Naive thymus-derived CD4-positive, alpha-beta T cell (primary cell): ENCODE measurements at regions of chr20 and their contacts with region 1.

Region 1: DNA sequence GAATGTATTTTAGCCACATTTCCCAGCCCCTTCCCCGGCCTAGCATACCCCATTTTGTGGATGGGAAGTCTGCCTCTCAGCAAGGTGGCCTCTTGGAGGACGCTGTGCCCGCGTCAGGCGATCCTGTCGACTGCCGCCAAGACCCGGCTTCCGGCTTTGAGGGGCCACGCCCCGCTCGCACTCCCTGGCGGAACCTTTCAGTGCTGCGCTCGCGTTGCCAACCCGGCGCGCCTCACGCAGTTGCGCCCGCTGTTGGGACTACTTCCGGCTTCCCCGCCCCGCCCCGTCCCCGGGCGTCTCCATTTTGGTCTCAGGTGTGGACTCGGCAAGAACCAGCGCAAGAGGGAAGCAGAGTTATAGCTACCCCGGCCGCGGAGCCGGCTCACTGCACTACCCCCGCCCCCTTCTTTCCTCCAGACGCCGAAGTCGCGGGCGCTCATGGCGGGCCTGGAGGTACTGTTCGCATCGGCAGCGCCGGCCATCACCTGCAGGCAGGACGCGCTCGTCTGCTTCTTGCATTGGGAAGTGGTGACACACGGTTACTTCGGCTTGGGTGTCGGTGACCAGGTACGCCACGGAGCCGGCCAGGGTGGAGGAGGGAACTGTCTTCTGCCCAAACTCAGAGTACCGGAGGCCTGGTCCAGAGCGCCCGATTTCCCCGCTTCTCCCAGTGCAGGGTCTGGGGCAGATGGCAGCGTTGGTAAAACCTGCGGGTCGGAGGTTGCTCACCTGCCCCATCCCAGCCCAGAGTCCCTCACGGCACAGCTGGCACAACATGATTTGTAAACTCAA is at the start of gene PSMF1:
- DNase-seq: peak; percentile 93 to 99 (median 96)
- ATAC-seq: peak; percentile 98
- H3K4me3 ChIP-seq: peak within 1 kb of the TSS; percentile 98
- H3K4me3 Mint-ChIP-seq: peak within 1 kb of the TSS; percentile 92 to 97 (median 94)
- H3K27ac ChIP-seq: peak within 1 kb of the TSS; percentile 85
- H3K27ac Mint-ChIP-seq: peak within 1 kb of the TSS; percentile 81 to 97 (median 94)
- H3K4me1 ChIP-seq: peaks cover 40 to 45% of the 10 kb centered on the region in 2 donors
- H3K4me1 Mint-ChIP-seq: peaks cover 46 to 68% (median 61%) of the 10 kb centered on the region in 7 donors
- H3K27me3 ChIP-seq: no peaks in the 10 kb centered on the region
- H3K27me3 Mint-ChIP-seq: no peaks in the 10 kb centered on the region
- total RNA-seq, gene PSMF1: 88.7 to 157 (median 114) TPM

Region 2: GRCh38 chr20:381581-382290 is 736.8 kb before region 1 on chr20:
- CTCF ChIA-PET with region 1: no interaction called
- POLR2A ChIA-PET with region 1: no interaction called
- intact Hi-C with region 1: loop called in 1 of 2 experiments (anchors 2 kb)
- DNase-seq: peak; percentile 41 to 75 (median 64)
- ATAC-seq: peak; percentile 81
- H3K4me3 ChIP-seq: peak overlapping the region; percentile 64
- H3K4me3 Mint-ChIP-seq: peak overlapping the region; percentile 66 to 91 (median 84)
- H3K27ac ChIP-seq: peak overlapping the region; percentile 73
- H3K27ac Mint-ChIP-seq: peak overlapping the region; percentile 55 to 86 (median 78)
- H3K4me1 ChIP-seq: no peaks in the 10 kb centered on the region
- H3K4me1 Mint-ChIP-seq: peaks cover 4 to 34% (median 13%) of the 10 kb centered on the region in 7 donors
- H3K27me3 ChIP-seq: no peaks in the 10 kb centered on the region
- H3K27me3 Mint-ChIP-seq: peaks cover 0 to 3% (median 0%) of the 10 kb centered on the region in 5 donors

Region 3: GRCh38 chr20:634556-634955 is 484.0 kb before region 1 on chr20:
- CTCF ChIA-PET with region 1: no interaction called
- POLR2A ChIA-PET with region 1: no interaction called
- intact Hi-C with region 1: no loop called
- DNase-seq: no peak
- ATAC-seq: no peak
- H3K4me3 ChIP-seq: no peak overlapping the region
- H3K4me3 Mint-ChIP-seq: no peak overlapping the region
- H3K27ac ChIP-seq: no peak overlapping the region
- H3K27ac Mint-ChIP-seq: no peak overlapping the region
- H3K4me1 ChIP-seq: no peaks in the 10 kb centered on the region
- H3K4me1 Mint-ChIP-seq: no peaks in the 10 kb centered on the region
- H3K27me3 ChIP-seq: no peaks in the 10 kb centered on the region
- H3K27me3 Mint-ChIP-seq: peaks cover 5 to 29% (median 16%) of the 10 kb centered on the region in 5 donors

Region 4: GRCh38 chr20:1108437-1108920 is 10.1 kb before region 1 on chr20:
- CTCF ChIA-PET with region 1: interaction called, 5 read pairs
- POLR2A ChIA-PET with region 1: interaction called, 4 read pairs
- intact Hi-C with region 1: loop called in 1 of 2 experiments (anchors 1 kb)
- DNase-seq: peak in 8 of 9 donors; percentile 18 to 51 (median 43)
- ATAC-seq: peak; percentile 87
- H3K4me3 ChIP-seq: no peak overlapping the region
- H3K4me3 Mint-ChIP-seq: no peak overlapping the region
- H3K27ac ChIP-seq: no peak overlapping the region
- H3K27ac Mint-ChIP-seq: peak overlapping the region in 1 of 9 donors; percentile 60
- H3K4me1 ChIP-seq: no peaks in the 10 kb centered on the region
- H3K4me1 Mint-ChIP-seq: peaks cover 5 to 7% (median 6%) of the 10 kb centered on the region in 7 donors
- H3K27me3 ChIP-seq: no peaks in the 10 kb centered on the region
- H3K27me3 Mint-ChIP-seq: peaks cover 0 to 10% (median 0%) of the 10 kb centered on the region in 5 donors

Region 5: GRCh38 chr20:1209447-1210387 is 91.2 kb after region 1 on chr20:
- CTCF ChIA-PET with region 1: no interaction called
- POLR2A ChIA-PET with region 1: no interaction called
- intact Hi-C with region 1: no loop called
- DNase-seq: no peak
- ATAC-seq: no peak
- H3K4me3 ChIP-seq: no peak overlapping the region
- H3K4me3 Mint-ChIP-seq: no peak overlapping the region
- H3K27ac ChIP-seq: no peak overlapping the region
- H3K27ac Mint-ChIP-seq: peak overlapping the region in 1 of 9 donors; percentile 3
- H3K4me1 ChIP-seq: peaks cover 0 to 5% of the 10 kb centered on the region in 2 donors
- H3K4me1 Mint-ChIP-seq: peaks cover 1 to 20% (median 9%) of the 10 kb centered on the region in 7 donors
- H3K27me3 ChIP-seq: no peaks in the 10 kb centered on the region
- H3K27me3 Mint-ChIP-seq: peaks cover 0 to 18% (median 0%) of the 10 kb centered on the region in 5 donors

Region 6: DNA sequence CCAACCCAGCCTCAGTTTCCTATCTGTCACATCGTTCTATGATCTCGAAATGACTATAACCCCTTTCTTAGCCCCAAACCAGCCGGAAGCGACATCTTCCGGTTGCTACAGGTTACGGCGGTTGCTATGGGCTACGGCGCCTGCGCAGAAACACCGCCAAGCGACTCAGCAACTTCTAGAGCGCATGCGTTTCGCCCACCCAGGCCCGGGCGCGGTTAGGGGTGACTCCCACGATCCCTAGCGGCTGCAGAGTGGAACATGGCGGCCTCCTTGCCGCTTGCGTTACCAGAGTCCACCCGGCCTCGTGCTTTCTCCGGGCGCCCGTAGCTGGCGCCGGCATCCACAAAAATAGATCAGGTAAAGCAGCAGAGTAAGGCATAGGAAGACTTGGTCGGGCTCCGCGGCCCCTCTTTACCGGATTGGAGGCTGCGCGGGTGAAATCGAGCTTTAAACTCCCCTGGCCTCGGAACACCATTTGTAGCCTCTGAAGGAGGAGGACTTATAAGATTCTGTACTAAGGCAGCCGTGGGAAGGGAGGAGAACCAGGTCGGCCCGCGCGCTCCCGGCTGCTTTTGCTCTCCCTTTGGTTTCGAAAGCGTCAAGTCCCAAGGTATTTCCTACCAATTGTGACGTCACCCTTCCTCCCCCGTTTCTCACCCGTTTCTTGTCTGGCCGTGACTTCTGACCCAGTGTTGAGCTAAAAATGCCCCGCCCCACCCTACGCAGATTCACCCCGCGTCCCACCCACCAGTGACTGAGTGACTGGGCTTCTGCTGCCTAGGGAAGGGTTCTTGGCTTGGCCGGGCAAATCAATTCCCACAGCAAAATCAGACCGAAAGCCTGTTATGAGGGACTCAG is 206.9 kb after region 1 on chr20:
- CTCF ChIA-PET with region 1: no interaction called
- POLR2A ChIA-PET with region 1: no interaction called
- intact Hi-C with region 1: loop called (anchors 1 kb)
- DNase-seq: peak; percentile 96 to 99 (median 98)
- ATAC-seq: peak; percentile 92
- H3K4me3 ChIP-seq: peak overlapping the region; percentile 95
- H3K4me3 Mint-ChIP-seq: no peak overlapping the region
- H3K27ac ChIP-seq: peak overlapping the region; percentile 97
- H3K27ac Mint-ChIP-seq: no peak overlapping the region
- H3K4me1 ChIP-seq: peaks cover 18 to 25% of the 10 kb centered on the region in 2 donors
- H3K4me1 Mint-ChIP-seq: peaks cover 0 to 31% (median 14%) of the 10 kb centered on the region in 7 donors
- H3K27me3 ChIP-seq: no peaks in the 10 kb centered on the region
- H3K27me3 Mint-ChIP-seq: no peaks in the 10 kb centered on the region

Region 7: DNA sequence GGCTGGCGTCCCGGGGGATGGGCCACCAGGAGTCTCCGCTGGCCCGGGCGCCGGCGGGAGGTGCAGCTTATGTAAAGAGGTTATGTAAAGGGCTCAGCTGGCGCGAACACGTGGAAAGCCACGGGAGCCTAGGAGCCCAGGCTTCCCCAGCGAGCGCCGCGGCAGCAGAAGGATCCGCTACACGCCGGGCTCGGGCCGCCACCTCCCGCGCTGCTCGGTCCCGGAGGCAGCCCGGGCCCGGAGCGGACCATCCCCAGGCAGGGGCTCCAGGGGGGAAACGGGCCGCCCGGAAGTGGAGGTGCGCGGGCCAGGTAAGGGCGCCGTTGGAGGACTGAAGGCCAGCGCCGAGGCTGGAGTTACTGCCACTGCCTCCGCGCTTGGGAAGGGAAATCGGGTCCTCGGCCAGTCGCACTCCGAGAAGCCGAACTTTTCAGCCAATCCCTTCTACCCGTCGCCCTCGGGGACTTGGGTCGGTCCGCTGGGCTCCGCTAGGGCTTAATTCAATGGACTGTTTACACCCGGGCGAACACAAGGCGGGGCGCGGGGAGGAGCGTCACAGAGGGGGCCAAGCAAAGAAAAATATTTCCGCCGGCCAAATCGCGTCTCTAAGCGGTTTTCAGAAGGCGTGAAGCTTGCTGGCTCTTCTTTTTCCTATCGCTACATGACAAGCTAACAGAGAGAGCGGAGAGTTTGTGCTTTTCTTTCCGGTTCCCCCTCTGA is 983.5 kb after region 1 on chr20:
- CTCF ChIA-PET with region 1: no interaction called
- POLR2A ChIA-PET with region 1: no interaction called
- intact Hi-C with region 1: loop called in 1 of 2 experiments (anchors 2 kb)
- DNase-seq: peak; percentile 82 to 94 (median 92)
- ATAC-seq: peak; percentile 88
- H3K4me3 ChIP-seq: peak overlapping the region; percentile 88
- H3K4me3 Mint-ChIP-seq: peak overlapping the region; percentile 90 to 97 (median 96)
- H3K27ac ChIP-seq: peak overlapping the region; percentile 96
- H3K27ac Mint-ChIP-seq: peak overlapping the region; percentile 99 to 100 (median 100)
- H3K4me1 ChIP-seq: peaks cover 29 to 38% of the 10 kb centered on the region in 2 donors
- H3K4me1 Mint-ChIP-seq: peaks cover 36 to 58% (median 44%) of the 10 kb centered on the region in 7 donors
- H3K27me3 ChIP-seq: no peaks in the 10 kb centered on the region
- H3K27me3 Mint-ChIP-seq: peaks cover 0 to 4% (median 0%) of the 10 kb centered on the region in 5 donors